ENCODE measurements at regions of chr2 and their contacts with region 1.

Region 1: DNA sequence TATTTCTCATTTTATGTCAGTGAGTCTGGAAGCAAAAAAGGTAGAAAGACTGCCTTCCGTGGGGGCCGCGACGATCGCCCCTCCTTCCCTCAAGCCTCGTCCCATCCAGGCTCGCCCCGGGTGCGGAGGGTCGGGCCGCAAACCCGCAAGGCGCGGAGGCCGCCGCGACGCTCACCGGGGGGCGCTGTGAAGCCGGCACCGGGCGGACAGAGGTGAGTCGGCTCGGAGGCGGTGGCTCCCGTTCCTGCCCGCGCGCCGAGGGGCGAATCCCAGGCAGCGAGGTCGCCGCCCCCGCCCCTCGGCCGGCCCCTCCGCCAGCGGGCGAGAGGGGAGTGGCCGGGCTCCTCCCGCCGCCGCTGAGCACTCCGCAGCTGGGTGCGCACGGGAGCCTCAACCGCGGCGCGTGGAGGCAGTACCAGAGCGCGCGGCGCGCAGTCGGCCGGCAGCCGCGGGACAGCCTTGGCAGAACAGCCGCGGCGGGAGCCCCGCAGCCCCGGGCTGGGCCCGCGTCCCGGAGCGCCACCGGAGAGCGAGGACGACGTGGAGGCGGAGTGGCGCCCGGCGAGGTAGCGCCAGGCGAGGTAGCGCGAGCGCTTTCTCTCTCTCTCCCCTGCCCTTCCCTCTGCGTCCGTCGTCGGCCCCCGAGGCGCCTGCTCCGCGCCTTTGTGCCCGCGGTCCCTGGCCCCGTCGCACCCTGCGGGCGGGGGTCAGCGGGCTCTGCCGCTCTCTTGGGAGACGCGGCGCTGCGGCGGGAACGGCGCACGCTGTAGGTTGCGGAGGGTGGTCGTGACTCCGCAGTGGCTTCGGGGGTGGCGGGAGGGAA is at the start of gene MYO1B:
- DNase-seq: peak; percentile 81
- ATAC-seq: peak; percentile 87
- H3K4me3 ChIP-seq: peak within 1 kb of the TSS; percentile 80 to 89 (median 85)
- H3K27ac ChIP-seq: peak within 1 kb of the TSS; percentile 86
- H3K4me1 ChIP-seq: peaks cover 56% of the 10 kb centered on the region
- H3K27me3 ChIP-seq: no peaks in the 10 kb centered on the region; a peak in 1 of 5 replicates
- CTCF ChIP-seq: peak; percentile 96
- EP300 ChIP-seq: peak in 1 of 2 experiments; percentile 42; a peak in 1 of 4 replicates
- POLR2A ChIP-seq: peak; percentile 87 to 91; a peak in 3 of 4 replicates
- RAD21 ChIP-seq: peak; percentile 99
- total RNA-seq, gene MYO1B: 89.8 and 134 TPM in 2 replicates

Region 2: DNA sequence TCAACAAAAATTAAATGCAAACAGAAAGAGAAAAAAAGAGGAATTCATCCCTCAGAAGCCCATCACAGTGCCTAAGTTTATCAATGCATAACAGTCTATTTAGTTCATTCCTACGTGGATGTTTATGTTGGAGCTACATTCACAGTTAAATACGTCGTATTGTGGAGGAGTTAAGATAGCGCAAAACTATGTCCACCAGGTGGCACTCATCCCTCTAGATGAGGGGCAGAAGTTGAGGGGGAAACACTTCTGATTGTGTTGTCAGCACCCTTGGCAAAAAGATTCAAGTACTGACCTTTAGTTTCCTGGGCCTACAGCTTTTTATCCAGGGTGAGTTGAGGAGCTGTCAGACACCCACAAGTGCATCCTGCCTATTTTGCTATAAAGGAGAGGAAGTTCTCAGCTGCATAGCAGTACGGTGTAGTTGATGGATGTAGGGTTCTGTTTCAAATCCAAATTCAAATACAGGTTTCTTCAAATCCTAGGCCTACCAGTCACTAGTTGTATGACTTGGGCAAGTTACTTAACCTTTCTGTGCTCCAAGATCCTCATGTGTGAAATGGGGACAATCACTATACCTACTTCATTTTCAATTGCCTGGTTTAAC is 26.9 kb before region 1 on chr2:
- CTCF ChIA-PET with region 1: no interaction called
- POLR2A ChIA-PET with region 1: interaction called, 4 read pairs
- in situ Hi-C with region 1: no loop called
- intact Hi-C with region 1: loop called (anchors 1 kb)
- DNase-seq: peak; percentile 80
- ATAC-seq: peak; percentile 97
- H3K4me3 ChIP-seq: no peak overlapping the region
- H3K27ac ChIP-seq: no peak overlapping the region
- H3K4me1 ChIP-seq: peaks cover 27% of the 10 kb centered on the region
- H3K27me3 ChIP-seq: no peaks in the 10 kb centered on the region
- CTCF ChIP-seq: peak; percentile 93
- EP300 ChIP-seq: no peak
- POLR2A ChIP-seq: no peak
- RAD21 ChIP-seq: peak; percentile 83

Region 3: DNA sequence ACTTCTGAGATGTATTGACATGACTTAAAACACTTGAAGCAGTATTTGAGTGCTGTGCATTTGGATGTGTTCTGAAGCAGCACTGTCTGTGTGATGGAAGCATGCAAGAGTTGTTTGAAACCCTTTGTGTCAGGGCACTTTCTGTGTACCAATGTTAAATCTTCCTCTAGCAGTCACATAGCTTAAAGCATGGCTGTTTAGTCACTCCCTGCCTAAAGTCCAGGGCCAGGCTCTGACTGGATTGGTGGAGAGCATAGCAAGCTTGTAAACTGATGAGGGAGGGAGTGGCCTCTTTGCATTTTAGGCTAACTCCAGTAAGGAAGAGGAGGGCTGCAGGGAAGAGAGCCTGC is 73.4 kb after region 1 on chr2:
- CTCF ChIA-PET with region 1: no interaction called
- POLR2A ChIA-PET with region 1: interaction called, 10 read pairs
- in situ Hi-C with region 1: no loop called
- intact Hi-C with region 1: loop called (anchors 5 kb)
- DNase-seq: peak; percentile 96
- ATAC-seq: peak; percentile 100
- H3K4me3 ChIP-seq: peak overlapping the region in 2 of 3 experiments; percentile 13 to 27; a peak in 5 of 6 replicates
- H3K27ac ChIP-seq: peak overlapping the region; percentile 53
- H3K4me1 ChIP-seq: peaks cover 20% of the 10 kb centered on the region
- H3K27me3 ChIP-seq: no peaks in the 10 kb centered on the region
- CTCF ChIP-seq: no peak
- EP300 ChIP-seq: no peak
- POLR2A ChIP-seq: peak; percentile 43 to 55; a peak in 2 of 4 replicates
- RAD21 ChIP-seq: no peak

Region 4: DNA sequence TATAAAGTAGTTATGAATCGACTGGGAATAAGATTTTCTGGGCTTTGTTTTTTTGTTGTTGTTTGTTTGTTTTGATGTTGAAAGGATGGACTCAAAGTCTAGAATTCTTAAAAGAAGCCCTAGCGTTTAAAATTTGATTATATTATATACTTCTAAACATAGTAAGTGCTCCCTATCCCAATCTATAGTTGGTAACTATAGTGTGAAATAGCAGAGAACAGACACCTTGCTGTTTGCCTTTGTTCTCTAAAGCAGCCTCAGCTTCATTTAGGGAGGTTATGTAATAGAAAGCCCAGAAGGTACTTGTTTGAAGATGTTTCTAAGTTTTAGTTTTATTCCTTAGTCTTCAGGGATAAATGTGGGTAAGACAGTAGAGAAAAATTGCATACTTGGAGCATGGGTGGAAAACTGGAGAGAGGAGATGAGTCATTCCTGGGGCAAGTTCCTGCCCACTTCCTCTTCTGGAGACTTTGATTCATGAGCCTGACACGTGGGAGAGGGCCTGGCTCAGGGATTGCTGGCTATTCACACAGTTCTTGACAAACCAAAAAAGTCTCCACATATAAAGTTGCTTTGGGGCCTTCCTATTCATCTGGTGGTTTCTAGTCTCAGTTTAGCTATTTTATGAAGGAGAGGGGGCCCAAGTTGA is 131.8 kb after region 1 on chr2:
- CTCF ChIA-PET with region 1: no interaction called
- POLR2A ChIA-PET with region 1: interaction called, 3 read pairs
- in situ Hi-C with region 1: loop called (anchors 10 kb)
- intact Hi-C with region 1: loop called (anchors 2 kb)
- DNase-seq: peak; percentile 86
- ATAC-seq: peak; percentile 98
- H3K4me3 ChIP-seq: no peak overlapping the region
- H3K27ac ChIP-seq: peak overlapping the region; percentile 52
- H3K4me1 ChIP-seq: peaks cover 44% of the 10 kb centered on the region
- H3K27me3 ChIP-seq: no peaks in the 10 kb centered on the region
- CTCF ChIP-seq: no peak
- EP300 ChIP-seq: peak in 1 of 2 experiments; percentile 80; a peak in 2 of 4 replicates
- POLR2A ChIP-seq: no peak
- RAD21 ChIP-seq: no peak

Region 5: DNA sequence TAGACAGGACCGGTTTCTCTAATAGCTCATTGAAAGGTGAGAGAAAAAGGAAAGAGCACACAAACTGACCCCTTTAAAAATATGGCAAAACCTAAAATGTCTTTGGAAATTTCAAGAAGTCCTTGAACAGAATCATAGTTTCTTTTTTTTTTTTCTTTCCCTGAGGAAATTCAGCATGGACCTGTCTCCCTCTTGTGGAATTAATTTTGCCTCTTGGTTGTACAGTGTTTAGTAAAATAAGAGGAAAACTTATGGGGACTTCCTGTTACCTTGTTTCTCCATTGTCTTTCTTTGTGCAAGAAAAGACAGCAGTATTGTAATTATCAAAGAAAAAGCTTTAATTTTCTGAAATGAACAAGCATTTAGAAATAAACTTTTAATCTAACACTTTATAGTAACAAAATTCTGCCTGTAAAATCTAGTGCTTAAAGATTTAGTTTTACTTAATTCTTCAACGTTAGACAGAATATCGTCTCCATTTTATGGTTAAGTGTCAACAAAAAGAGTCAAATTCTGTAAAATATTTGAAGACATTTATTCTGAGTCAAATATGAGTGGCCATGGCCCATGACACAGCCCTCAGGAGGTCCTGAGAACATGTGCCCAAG is 256.4 kb after region 1 on chr2:
- CTCF ChIA-PET with region 1: interaction called, 3 read pairs
- POLR2A ChIA-PET with region 1: no interaction called
- in situ Hi-C with region 1: no loop called
- intact Hi-C with region 1: loop called (anchors 1 kb)
- DNase-seq: peak; percentile 35
- ATAC-seq: peak; percentile 71
- H3K4me3 ChIP-seq: peak overlapping the region in 1 of 3 experiments; percentile 30; a peak in 1 of 6 replicates
- H3K27ac ChIP-seq: no peak overlapping the region
- H3K4me1 ChIP-seq: peaks cover 20% of the 10 kb centered on the region
- H3K27me3 ChIP-seq: peaks cover 0 to 7% of the 10 kb centered on the region in 2 experiments; a peak in 2 of 5 replicates
- CTCF ChIP-seq: peak; percentile 70
- EP300 ChIP-seq: no peak
- POLR2A ChIP-seq: no peak
- RAD21 ChIP-seq: no peak

Measured in HepG2 (cell line).